PC-9 (cell line): ENCODE measurements at regions of chr17 and their contacts with region 1.

Region 1: DNA sequence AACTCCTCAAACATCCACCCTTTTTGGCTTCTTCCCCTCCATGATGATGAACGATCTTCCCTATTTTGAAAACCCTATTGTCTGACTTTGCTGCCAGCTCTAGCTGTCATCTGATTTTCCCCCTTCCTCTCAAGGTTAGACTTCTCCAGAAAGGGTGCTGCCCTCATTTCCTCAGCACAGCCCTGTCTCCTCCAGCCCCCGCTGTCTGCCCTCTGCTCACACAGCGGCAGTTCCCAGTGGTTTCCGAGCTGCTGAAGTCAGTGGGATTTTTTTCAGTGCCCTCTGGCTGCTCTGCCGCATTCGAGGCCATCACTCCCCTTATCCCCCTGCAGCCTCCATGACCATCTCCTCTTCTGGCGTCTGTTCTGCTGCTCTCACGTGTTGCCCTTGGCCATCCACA is 26.6 kb upstream of the C17orf107 start:
- DNase-seq: no peak
- H3K4me3 ChIP-seq: no peak overlapping the region
- H3K27ac ChIP-seq: no peak overlapping the region
- H3K4me1 ChIP-seq: no peaks in the 10 kb centered on the region
- H3K27me3 ChIP-seq: no peaks in the 10 kb centered on the region
- CTCF ChIP-seq: no peak

Region 2: DNA sequence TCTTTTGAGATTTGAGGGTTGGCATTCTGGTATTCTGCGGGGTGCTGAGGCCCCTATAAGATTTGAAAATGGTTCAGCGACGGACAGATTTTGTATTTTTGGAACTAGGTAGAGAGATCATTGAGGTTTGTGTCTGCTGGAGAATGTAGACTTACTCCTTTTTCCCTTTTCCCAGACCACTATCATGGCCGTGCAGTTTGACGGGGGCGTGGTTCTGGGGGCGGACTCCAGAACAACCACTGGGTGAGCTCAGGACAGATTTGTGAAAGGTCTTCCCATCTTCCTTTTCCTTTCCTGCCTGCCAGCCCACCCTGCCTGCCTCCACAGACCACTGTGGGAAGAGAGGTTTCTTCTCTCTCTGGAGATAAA is 76.2 kb before region 1 on chr17:
- CTCF ChIA-PET with region 1: no interaction called
- POLR2A ChIA-PET with region 1: no interaction called
- intact Hi-C with region 1: no loop called
- DNase-seq: peak in 1 of 2 experiments; percentile 41
- H3K4me3 ChIP-seq: peak overlapping the region; percentile 82
- H3K27ac ChIP-seq: peak overlapping the region; percentile 33
- H3K4me1 ChIP-seq: 0 out of 2 replicates have a peak, but pooled peaks cover 6% of the 10 kb centered on the region
- H3K27me3 ChIP-seq: no peaks in the 10 kb centered on the region
- CTCF ChIP-seq: no peak

Region 3: GRCh38 chr17:4822835-4823234 is 50.0 kb before region 1 on chr17:
- CTCF ChIA-PET with region 1: interaction called, 6 read pairs
- POLR2A ChIA-PET with region 1: interaction called, 13 read pairs
- intact Hi-C with region 1: no loop called
- DNase-seq: no peak
- H3K4me3 ChIP-seq: no peak overlapping the region
- H3K27ac ChIP-seq: no peak overlapping the region
- H3K4me1 ChIP-seq: no peaks in the 10 kb centered on the region
- H3K27me3 ChIP-seq: no peaks in the 10 kb centered on the region
- CTCF ChIP-seq: no peak

Region 4: DNA sequence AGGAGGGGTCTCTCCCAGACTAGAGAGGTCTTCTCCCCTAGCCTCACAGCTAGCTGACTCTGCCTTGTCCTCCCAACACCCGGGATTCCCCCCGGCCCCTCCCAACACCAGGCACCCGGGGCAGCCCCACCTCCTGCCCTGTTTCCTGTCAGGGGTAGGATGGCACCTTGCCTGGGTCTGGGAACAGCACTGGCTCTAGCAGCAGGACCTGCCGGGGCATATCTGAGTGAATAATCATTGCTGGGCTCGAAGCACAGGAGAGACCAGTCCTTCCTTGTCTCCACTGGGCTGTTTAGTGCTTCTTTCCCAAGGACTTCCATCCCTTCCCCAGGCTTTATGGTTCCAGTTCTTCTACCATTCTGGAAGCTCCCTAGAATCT is 13.9 kb before region 1 on chr17:
- CTCF ChIA-PET with region 1: interaction called, 13 read pairs
- POLR2A ChIA-PET with region 1: interaction called, 15 read pairs
- intact Hi-C with region 1: no loop called
- DNase-seq: peak; percentile 59 to 84
- H3K4me3 ChIP-seq: no peak overlapping the region
- H3K27ac ChIP-seq: peak overlapping the region; percentile 37
- H3K4me1 ChIP-seq: peaks cover 20% of the 10 kb centered on the region
- H3K27me3 ChIP-seq: no peaks in the 10 kb centered on the region
- CTCF ChIP-seq: no peak

Region 5: DNA sequence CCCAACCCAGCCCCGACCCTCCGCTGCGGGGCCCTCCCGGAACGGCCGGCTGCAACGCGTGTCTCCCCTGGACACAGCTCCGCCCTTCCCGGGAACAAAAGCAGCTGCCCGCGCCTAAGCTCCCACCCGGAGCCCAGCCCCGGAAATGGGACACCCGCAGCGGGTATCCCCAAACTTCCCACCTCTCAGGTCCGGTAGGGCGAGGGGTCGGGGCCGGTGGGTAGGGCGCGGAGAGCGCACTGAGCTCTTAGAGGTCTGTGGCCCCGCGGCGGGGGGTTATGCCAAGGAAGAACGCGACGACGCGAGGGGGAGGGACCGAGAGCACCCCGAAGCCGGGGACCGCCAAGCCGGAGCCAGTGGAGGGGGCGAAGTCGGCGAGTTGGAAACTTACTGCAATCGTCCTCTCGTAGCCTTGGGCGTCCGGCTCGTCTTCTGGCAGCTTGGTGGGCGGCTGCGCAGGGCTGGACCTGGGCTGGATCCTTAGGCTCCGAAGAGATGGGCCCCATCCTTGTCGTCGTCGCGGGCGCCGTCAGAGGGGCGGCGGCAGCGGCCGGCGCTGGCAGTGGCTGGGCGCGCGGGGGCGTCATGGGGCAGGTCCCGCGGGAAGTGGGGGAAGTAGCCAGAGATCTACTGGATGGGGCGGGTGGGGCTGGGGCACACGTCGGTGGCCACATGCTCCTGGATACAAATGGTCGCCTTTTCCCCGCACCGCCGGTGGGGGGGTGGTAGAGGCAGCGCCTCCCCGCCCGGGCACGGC is 250.0 kb after region 1 on chr17:
- CTCF ChIA-PET with region 1: no interaction called
- POLR2A ChIA-PET with region 1: no interaction called
- intact Hi-C with region 1: no loop called
- DNase-seq: no peak
- H3K4me3 ChIP-seq: no peak overlapping the region
- H3K27ac ChIP-seq: no peak overlapping the region
- H3K4me1 ChIP-seq: no peaks in the 10 kb centered on the region
- H3K27me3 ChIP-seq: peaks cover 76% of the 10 kb centered on the region
- CTCF ChIP-seq: no peak